ENCODE measurements at regions of chr20 and their contacts with region 1.

Region 1: GRCh38 chr20:31661625-31662371 is 24.1 kb downstream of the COX4I2 start:
- DNase-seq: no peak
- H3K4me3 ChIP-seq: peak overlapping the region; percentile 48
- CTCF ChIP-seq: peak; percentile 77

Region 2: GRCh38 chr20:31517373-31517772 is 144.4 kb before region 1 on chr20:
- CTCF ChIA-PET with region 1: no interaction called
- POLR2A ChIA-PET with region 1: no interaction called
- DNase-seq: no peak
- H3K4me3 ChIP-seq: 0 out of 2 replicates have a peak overlapping the region, but pooled peaks have one; percentile 2
- CTCF ChIP-seq: no peak

Region 3: DNA sequence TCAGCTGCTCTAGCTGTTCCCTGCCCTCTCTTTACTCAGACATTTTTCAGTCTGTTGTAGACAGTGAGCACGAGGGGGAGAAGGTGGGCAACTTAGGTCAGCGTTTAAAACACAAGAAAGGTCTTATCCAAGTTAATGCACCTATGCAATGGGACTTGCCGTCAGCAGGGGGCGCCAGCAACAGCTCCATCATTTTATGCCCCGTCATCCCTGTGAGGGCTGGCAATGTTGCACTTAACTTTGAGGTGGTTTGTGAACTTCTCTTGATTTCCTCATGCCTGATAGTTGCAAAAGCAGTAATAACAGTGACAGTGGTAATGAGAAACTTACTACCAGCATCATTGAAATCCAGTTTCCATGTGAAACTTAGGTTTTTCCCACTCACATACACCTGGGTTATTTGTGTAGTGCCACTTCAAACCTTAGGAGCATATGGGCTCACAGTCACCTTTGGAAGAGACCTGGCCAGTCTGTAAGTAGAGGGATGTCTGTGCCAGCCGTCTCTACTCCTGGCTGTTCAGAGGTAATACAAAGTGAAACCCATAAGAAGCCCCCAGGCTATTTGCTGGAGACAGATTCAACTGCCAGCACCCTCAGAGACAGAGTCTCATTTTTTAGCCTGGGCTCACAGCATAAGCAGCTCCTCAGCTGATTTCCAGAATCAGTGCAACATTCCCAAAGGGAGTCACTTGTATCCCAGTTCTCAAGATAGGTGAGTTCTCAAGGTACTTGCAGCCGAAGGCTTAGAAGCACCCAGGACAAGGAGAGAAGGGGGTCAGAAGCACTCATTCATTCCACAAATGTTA is 101.5 kb before region 1 on chr20:
- CTCF ChIA-PET with region 1: interaction called, 22 read pairs
- POLR2A ChIA-PET with region 1: no interaction called
- DNase-seq: no peak
- H3K4me3 ChIP-seq: no peak overlapping the region
- CTCF ChIP-seq: peak; percentile 89

Region 4: DNA sequence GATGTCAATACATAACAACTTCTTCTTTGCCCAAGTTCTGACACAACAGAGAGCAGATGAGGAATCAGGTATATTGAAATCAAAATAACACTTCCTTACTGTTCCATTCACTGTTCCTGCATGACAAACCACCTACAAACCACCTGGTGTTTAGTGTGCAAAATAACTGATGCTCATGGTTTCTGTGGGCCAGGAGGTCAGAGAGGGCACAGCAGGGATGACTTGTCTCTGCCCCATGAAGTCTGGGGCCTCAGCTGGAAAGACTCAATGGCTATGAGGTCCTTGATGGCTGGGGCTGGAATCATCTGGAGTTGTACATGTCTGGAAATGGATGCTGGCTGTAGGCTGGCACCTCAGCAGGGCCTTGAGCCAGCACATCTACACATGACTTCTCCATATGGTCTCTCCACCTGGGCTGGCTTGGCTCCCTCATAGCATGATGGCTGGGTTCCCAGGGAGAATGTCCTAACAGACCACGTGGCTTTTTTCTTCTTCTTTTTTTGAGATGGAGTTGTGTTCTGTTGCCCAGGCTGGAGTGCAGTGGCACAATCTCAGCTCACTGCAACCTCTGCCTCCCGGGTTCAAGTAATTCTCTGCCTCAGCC is 31.5 kb before region 1 on chr20:
- CTCF ChIA-PET with region 1: interaction called, 149 read pairs
- POLR2A ChIA-PET with region 1: interaction called, 4 read pairs
- DNase-seq: no peak
- H3K4me3 ChIP-seq: no peak overlapping the region
- CTCF ChIP-seq: no peak

Region 5: DNA sequence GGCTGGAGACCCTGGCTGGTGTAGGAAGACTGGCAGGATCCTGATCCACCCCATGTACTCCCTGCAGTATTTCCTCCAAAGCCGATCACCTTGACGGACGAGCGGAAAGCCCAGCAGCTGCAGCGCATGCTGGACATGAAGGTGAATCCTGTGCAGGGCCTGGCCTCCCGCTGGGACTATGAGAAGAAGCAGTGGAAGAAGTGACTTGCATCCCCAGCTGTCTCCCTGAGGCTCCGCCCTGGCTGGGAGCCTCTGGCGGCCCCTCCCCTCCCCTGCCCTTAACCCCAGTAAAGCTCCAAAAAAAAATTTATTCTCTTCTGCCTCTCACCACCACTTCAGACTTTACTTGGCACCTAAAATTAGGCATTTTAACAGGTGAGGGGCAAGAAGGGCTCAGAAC is 17.1 kb before region 1 on chr20:
- CTCF ChIA-PET with region 1: interaction called, 66 read pairs
- POLR2A ChIA-PET with region 1: no interaction called
- DNase-seq: no peak
- H3K4me3 ChIP-seq: no peak overlapping the region
- CTCF ChIP-seq: no peak

Region 6: GRCh38 chr20:31684153-31685015 is 22.6 kb after region 1 on chr20:
- CTCF ChIA-PET with region 1: interaction called, 17 read pairs
- POLR2A ChIA-PET with region 1: no interaction called
- DNase-seq: no peak
- H3K4me3 ChIP-seq: no peak overlapping the region
- CTCF ChIP-seq: no peak

Region 7: GRCh38 chr20:31698803-31699718 is 37.3 kb after region 1 on chr20:
- CTCF ChIA-PET with region 1: interaction called, 39 read pairs
- POLR2A ChIA-PET with region 1: interaction called, 4 read pairs
- DNase-seq: peak; percentile 87
- H3K4me3 ChIP-seq: no peak overlapping the region
- CTCF ChIP-seq: no peak

Region 8: GRCh38 chr20:31731321-31731717 is 69.5 kb after region 1 on chr20:
- CTCF ChIA-PET with region 1: interaction called, 84 read pairs
- POLR2A ChIA-PET with region 1: no interaction called
- DNase-seq: no peak
- H3K4me3 ChIP-seq: no peak overlapping the region
- CTCF ChIP-seq: no peak

Region 9: DNA sequence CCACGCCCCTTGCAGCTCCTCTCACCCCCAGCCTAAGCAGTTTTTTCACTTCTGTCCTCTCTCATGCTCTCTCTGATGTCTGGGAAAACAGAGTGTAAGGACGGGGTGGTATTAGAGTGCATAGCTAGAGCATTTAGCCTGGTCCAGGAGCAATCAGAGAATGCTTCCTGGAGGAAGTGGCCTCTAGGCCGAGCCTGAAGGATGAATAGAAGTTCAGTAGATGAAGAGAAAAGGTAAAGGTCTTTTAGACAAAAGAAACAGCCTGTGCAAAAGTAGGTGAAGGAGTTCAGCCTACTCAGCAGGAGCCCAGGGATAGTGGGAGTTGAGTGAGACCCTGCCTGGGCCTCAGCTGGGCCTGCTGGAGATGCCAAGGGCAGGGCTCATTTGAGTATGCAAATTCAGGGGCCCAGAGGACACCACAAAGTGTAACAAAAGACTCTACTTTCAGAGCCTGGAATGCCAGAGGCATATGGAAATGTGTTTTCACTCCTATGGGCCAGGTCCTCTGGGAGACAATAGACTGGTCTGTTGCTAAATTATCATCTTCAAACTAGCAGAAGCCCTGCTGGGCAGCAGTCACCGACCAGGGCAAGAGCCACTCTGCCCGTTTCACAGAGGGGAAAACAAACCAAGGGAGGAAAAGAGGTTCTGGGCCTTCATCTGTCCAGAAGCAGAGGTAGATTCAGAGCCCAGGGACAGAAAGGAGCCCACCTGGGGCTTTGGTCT is 428.0 kb after region 1 on chr20:
- CTCF ChIA-PET with region 1: no interaction called
- POLR2A ChIA-PET with region 1: no interaction called
- DNase-seq: no peak
- H3K4me3 ChIP-seq: no peak overlapping the region
- CTCF ChIP-seq: no peak

Measured in AG04449 (cell line).